Activated CD4-positive, alpha-beta T cell treated with anti-CD3 and anti-CD28 coated beads, Interleukin-2, amount 10 ng/mL, durations not matched to agents 7 days and 5 days (primary cell): ENCODE measurements at regions of chr11 and their contacts with region 1.

Region 1: GRCh38 chr11:66556086-66556485 is 9.4 kb downstream of the ACTN3 start:
- DNase-seq: no peak
- H3K4me3 Mint-ChIP-seq: no peak overlapping the region
- H3K27ac Mint-ChIP-seq: no peak overlapping the region
- H3K4me1 Mint-ChIP-seq: peaks cover 4% of the 10 kb centered on the region
- H3K27me3 Mint-ChIP-seq: peaks cover 7% of the 10 kb centered on the region

Region 2: GRCh38 chr11:66328307-66329144 is 227.6 kb before region 1 on chr11:
- CTCF ChIA-PET with region 1: no interaction called
- POLR2A ChIA-PET with region 1: no interaction called
- DNase-seq: peak; percentile 79
- H3K4me3 Mint-ChIP-seq: no peak overlapping the region
- H3K27ac Mint-ChIP-seq: peak overlapping the region; percentile 86
- H3K4me1 Mint-ChIP-seq: peaks cover 50% of the 10 kb centered on the region
- H3K27me3 Mint-ChIP-seq: no peaks in the 10 kb centered on the region

Region 3: GRCh38 chr11:66545701-66546367 is 10.3 kb before region 1 on chr11 and contains the start of gene ZDHHC24:
- CTCF ChIA-PET with region 1: interaction called, 11 read pairs
- POLR2A ChIA-PET with region 1: no interaction called
- DNase-seq: peak; percentile 85
- H3K4me3 Mint-ChIP-seq: peak within 1 kb of the TSS; percentile 85
- H3K27ac Mint-ChIP-seq: peak within 1 kb of the TSS; percentile 88
- H3K4me1 Mint-ChIP-seq: peaks cover 27% of the 10 kb centered on the region
- H3K27me3 Mint-ChIP-seq: peaks cover 15% of the 10 kb centered on the region
- total RNA-seq, gene ZDHHC24: 16.8 to 16.9 TPM

Region 4: DNA sequence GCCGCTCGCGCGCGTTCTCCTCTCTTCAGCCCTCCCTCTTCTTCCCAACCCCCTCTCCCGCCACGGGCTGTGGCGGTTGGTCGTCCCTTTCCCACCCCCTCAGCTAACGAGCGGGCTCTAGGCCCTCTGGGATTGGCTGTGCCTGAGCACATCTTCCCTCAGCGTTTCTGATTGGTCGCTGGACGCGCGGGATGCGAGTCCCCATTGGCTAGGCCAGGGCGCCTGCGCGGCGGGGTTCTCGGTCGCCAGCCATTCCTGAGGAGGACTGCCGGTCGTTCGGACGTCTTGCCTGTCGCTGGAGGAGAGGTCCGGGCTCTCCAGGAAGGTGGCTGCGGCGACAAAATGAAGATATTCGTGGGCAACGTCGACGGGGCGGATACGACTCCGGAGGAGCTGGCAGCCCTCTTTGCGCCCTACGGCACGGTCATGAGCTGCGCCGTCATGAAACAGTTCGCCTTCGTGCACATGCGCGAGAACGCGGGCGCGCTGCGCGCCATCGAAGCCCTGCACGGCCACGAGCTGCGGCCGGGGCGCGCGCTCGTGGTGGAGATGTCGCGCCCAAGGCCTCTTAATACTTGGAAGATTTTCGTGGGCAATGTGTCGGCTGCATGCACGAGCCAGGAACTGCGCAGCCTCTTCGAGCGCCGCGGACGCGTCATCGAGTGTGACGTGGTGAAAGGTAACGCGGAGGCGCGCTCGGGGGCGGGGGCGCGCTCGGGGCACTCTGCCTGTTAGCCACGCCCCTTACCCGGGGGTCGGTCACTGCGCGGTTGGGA is 60.5 kb after region 1 on chr11 and contains the start of gene RBM14:
- CTCF ChIA-PET with region 1: no interaction called
- POLR2A ChIA-PET with region 1: no interaction called
- DNase-seq: peak; percentile 99
- H3K4me3 Mint-ChIP-seq: peak within 1 kb of the TSS; percentile 98
- H3K27ac Mint-ChIP-seq: peak within 1 kb of the TSS; percentile 99
- H3K4me1 Mint-ChIP-seq: peaks cover 45% of the 10 kb centered on the region
- H3K27me3 Mint-ChIP-seq: no peaks in the 10 kb centered on the region
- total RNA-seq, gene RBM14: 124 to 140 TPM